ENCODE measurements at regions of chr19 and their contacts with region 1.

Region 1: GRCh38 chr19:20077791-20078463 is at the start of gene ZNF90:
- DNase-seq: peak; percentile 92 to 98
- H3K4me3 ChIP-seq: peak within 1 kb of the TSS; percentile 68 to 71
- H3K27ac ChIP-seq: peak within 1 kb of the TSS; percentile 6 to 54
- H3K4me1 ChIP-seq: peaks cover 0 to 3% of the 10 kb centered on the region in 2 donors
- H3K27me3 ChIP-seq: no peaks in the 10 kb centered on the region
- CTCF ChIP-seq: no peak
- total RNA-seq, gene ZNF90: not detected

Region 2: GRCh38 chr19:20051841-20052768 is 25.8 kb before region 1 on chr19:
- intact Hi-C with region 1: loop called (anchors 1 kb)
- DNase-seq: peak; percentile 91 to 98
- H3K4me3 ChIP-seq: peak overlapping the region; percentile 74
- H3K27ac ChIP-seq: peak overlapping the region; percentile 75 to 76
- H3K4me1 ChIP-seq: no peaks in the 10 kb centered on the region
- H3K27me3 ChIP-seq: no peaks in the 10 kb centered on the region
- CTCF ChIP-seq: peak in 1 of 3 experiments; percentile 18

Measured in ascending aorta (tissue), 2 donors.